ENCODE measurements at regions of chr17 and their contacts with region 1.

Region 1: GRCh38 chr17:28726226-28727130 is at the start of gene TLCD1:
- DNase-seq: peak; percentile 87
- ATAC-seq: peak; percentile 40
- H3K4me3 Mint-ChIP-seq: peak within 1 kb of the TSS; percentile 95
- H3K27ac Mint-ChIP-seq: peak within 1 kb of the TSS; percentile 99
- H3K4me1 Mint-ChIP-seq: peaks cover 70% of the 10 kb centered on the region
- H3K27me3 Mint-ChIP-seq: no peaks in the 10 kb centered on the region
- CTCF ChIP-seq: peak; percentile 78
- total RNA-seq, gene TLCD1: 40.7 and 41.0 TPM in 2 replicates

Region 2: DNA sequence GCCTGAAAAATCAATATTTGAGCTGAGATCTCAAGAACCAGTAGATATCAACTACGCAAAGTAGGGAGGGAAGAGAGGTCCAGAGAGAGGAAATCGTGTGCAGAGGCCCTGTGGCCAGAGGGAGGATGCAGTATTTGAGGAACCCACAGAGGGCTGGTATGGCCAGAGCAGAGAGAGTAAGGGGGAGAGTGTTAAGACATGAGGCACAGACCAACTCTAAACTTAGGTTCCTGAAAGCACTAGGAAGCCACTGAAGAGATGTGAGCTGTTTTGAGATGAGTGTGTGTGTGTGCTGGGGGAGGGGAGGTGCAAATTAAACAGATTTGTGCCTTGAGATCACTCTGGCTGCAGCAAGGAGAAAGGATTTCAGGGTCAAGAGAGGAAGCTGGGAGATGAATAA is 242.2 kb before region 1 on chr17:
- CTCF ChIA-PET with region 1: no interaction called
- POLR2A ChIA-PET with region 1: no interaction called
- intact Hi-C with region 1: no loop called
- DNase-seq: no peak
- ATAC-seq: no peak
- H3K4me3 Mint-ChIP-seq: no peak overlapping the region
- H3K27ac Mint-ChIP-seq: no peak overlapping the region
- H3K4me1 Mint-ChIP-seq: no peaks in the 10 kb centered on the region
- H3K27me3 Mint-ChIP-seq: no peaks in the 10 kb centered on the region
- CTCF ChIP-seq: no peak

Region 3: DNA sequence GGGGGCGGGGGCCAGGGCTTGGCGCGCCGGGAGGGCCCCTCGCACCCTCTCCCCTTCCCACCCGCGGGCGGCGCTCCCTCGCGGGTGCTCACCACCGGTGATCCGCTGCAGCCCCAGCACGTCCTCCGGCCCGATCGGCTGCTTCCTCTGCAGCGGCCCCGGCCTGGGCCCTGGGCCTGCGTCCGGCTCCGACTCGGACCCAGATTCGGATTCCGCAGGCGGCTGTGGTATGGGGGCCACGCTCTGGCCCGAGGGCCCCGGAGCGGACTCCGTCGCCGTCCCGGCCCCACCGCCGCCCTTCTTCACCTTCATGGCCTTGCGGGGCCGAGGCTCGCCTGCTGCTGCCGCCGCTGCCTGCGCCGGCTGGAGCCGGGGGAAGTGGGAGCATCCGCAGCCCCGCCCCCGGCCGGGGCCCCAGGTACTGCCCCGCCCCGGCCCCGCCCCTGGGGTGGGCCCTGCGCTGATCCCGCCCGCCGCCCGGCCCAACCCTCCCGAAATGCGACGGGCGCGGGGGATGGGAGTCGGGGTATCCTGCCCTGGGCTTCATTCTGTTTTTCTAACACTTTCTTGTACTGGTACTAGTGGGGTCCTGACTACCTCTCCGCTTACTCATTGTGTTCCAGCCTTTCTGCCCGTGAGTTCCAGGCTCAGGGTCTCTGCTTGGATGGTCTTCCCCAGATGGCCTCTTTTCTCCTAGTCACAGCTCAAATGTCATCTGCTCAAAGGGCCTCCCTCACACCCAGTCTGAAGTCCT is 174.1 kb before region 1 on chr17 and contains the start of gene UNC119:
- CTCF ChIA-PET with region 1: no interaction called
- POLR2A ChIA-PET with region 1: interaction called, 4 read pairs
- intact Hi-C with region 1: loop called (anchors 5 kb)
- DNase-seq: peak; percentile 85
- ATAC-seq: peak; percentile 66
- H3K4me3 Mint-ChIP-seq: peak within 1 kb of the TSS; percentile 97
- H3K27ac Mint-ChIP-seq: peak within 1 kb of the TSS; percentile 93
- H3K4me1 Mint-ChIP-seq: peaks cover 65% of the 10 kb centered on the region
- H3K27me3 Mint-ChIP-seq: no peaks in the 10 kb centered on the region
- CTCF ChIP-seq: no peak
- total RNA-seq, gene UNC119: 426 and 437 TPM in 2 replicates

Region 4: DNA sequence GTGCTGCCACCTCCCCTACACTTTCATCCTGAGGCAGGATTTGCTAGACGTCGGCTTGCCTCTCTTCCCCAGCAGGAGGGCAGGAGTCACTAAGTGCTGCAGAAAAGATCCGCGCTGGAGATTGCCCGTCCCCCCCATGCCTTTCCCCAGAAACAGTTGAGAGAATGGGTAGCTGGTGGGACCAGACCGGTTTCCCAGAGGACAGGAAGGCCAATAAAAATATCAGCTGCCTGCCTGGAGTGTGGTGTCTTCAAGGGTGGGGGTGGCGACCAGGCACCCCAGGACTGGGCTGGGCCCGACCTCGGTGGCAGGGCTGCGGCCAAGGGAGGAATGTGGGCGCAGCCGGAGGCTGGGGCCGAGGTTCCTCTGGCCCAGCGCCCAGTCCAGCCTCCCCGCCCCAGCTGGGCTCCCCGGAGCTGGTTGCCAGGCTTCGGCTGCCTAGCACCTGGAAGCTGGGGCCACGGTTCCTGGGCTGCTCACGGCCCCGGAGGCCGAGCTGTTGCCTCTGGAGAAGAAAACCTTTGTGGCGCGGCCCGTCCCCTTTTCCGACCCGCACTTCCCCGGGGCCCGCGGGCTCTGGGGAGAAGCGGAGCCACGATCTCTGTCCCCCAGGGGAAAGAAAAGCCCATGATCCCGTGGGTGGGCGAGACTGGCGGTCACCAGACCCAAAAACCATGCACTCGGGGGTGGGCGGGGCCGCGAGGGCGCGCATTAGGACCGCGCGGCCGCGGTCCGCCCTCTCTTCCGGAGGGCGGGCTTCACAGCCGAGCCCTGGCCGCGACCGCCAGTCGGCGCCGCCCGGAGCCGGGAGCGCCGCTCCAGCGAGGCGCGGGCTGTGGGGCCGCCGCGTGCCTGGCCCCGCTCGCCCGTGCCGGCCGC is 17.0 kb after region 1 on chr17 and contains the start of gene TRAF4:
- CTCF ChIA-PET with region 1: interaction called, 545 read pairs
- POLR2A ChIA-PET with region 1: interaction called, 2,384 read pairs
- intact Hi-C with region 1: loop called (anchors 1 kb)
- DNase-seq: peak; percentile 87
- ATAC-seq: peak; percentile 66
- H3K4me3 Mint-ChIP-seq: peak within 1 kb of the TSS; percentile 93
- H3K27ac Mint-ChIP-seq: peak within 1 kb of the TSS; percentile 99
- H3K4me1 Mint-ChIP-seq: peaks cover 70% of the 10 kb centered on the region
- H3K27me3 Mint-ChIP-seq: no peaks in the 10 kb centered on the region
- CTCF ChIP-seq: no peak
- total RNA-seq, gene TRAF4: 754 and 903 TPM in 2 replicates

Region 5: DNA sequence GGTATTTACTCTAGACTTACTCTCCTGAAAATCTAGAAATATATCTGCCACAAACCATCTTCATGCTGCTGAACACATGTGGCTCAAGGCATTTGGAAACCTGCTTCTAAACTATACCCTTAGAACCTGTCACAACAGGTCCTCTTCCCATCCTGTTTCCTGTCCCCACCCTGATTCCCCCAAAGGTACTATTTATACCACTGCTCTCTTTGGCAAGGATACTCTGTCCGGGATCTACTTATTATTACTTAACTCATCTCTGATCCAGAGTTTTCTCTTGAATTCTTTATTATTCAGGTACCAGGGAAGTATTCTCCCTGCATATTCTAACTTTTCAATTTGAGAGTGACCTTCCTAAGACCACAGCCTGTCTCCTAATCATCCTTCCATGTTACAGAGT is 50.7 kb after region 1 on chr17:
- CTCF ChIA-PET with region 1: no interaction called
- POLR2A ChIA-PET with region 1: interaction called, 14 read pairs
- intact Hi-C with region 1: no loop called
- DNase-seq: no peak
- ATAC-seq: no peak
- H3K4me3 Mint-ChIP-seq: no peak overlapping the region
- H3K27ac Mint-ChIP-seq: no peak overlapping the region
- H3K4me1 Mint-ChIP-seq: peaks cover 32% of the 10 kb centered on the region
- H3K27me3 Mint-ChIP-seq: no peaks in the 10 kb centered on the region
- CTCF ChIP-seq: no peak

Region 6: DNA sequence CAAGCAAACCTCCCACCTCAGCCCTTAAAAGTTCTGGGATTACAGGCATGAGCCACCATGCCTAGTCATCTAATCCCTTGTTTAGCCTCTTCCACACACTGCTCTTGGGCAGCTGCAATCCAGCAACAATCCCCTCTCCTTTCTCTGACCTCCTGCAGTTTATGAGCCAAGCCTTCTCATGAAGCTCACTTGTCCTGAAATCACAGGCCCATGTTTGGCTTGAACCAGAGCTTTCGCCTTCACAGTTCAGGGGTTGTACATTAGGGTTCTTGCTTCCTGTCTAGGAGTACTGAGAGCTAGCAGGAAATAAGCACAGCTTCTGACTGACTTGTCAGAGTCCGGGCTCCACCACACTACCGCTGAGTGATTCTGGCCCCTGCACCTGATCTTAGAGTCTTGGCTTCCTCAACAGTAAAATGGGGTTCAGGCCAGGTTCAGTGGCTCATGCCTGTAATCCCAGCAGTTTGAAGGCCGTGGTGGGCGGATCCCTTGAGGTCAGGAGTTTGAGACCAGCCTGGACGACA is 144.6 kb after region 1 on chr17:
- CTCF ChIA-PET with region 1: interaction called, 6 read pairs
- POLR2A ChIA-PET with region 1: interaction called, 20 read pairs
- intact Hi-C with region 1: no loop called
- DNase-seq: no peak
- ATAC-seq: peak; percentile 99
- H3K4me3 Mint-ChIP-seq: peak overlapping the region; percentile 50
- H3K27ac Mint-ChIP-seq: peak overlapping the region; percentile 95
- H3K4me1 Mint-ChIP-seq: peaks cover 30% of the 10 kb centered on the region
- H3K27me3 Mint-ChIP-seq: no peaks in the 10 kb centered on the region
- CTCF ChIP-seq: no peak

Region 7: DNA sequence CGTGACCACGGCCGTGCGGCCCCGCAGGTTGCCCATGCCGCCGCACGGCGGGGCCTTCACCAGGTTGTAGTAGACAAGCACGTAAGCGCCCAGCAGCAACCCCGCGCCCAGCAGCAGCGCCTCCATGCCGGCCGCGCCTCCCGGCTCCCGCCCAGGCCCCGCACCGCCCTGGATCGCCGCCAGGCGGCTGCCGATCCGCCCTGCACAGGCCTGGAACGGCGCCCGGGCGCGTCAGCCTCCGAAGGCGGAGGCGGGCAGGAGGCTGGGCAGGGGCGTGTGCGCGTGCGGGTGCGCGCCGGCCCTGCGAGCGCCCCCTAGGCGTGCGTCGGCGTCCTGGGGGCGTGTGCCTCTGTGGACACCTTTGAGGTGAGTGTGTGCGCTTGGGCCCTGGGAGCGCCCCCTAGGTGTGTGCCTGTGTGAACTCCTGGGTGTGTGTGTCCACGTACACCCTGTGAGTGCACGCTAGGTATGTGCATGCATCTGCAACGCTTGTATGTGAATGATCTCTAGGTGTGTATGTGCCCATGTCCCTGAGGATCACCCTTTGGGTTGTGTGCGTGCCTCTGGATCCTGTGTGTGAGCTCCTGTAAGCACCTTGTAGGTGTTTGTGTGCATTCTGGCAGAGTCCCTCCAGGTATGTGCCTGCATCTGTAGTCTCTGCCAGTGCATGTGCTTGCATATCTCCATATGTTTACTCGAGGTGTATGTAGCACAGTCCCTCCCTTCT is 176.5 kb after region 1 on chr17 and contains the start of gene DHRS13:
- CTCF ChIA-PET with region 1: interaction called, 37 read pairs
- POLR2A ChIA-PET with region 1: interaction called, 81 read pairs
- intact Hi-C with region 1: loop called (anchors 1 kb)
- DNase-seq: peak; percentile 97
- ATAC-seq: peak; percentile 90
- H3K4me3 Mint-ChIP-seq: peak within 1 kb of the TSS; percentile 82
- H3K27ac Mint-ChIP-seq: peak within 1 kb of the TSS; percentile 77
- H3K4me1 Mint-ChIP-seq: peaks cover 37% of the 10 kb centered on the region
- H3K27me3 Mint-ChIP-seq: no peaks in the 10 kb centered on the region
- CTCF ChIP-seq: peak; percentile 82
- total RNA-seq, gene DHRS13: 32.0 and 39.6 TPM in 2 replicates

Region 8: GRCh38 chr17:28951991-28952975 is 225.8 kb after region 1 on chr17:
- CTCF ChIA-PET with region 1: interaction called, 16 read pairs
- POLR2A ChIA-PET with region 1: interaction called, 95 read pairs
- intact Hi-C with region 1: loop called (anchors 1 kb)
- DNase-seq: peak; percentile 82
- ATAC-seq: peak; percentile 68
- H3K4me3 Mint-ChIP-seq: no peak overlapping the region
- H3K27ac Mint-ChIP-seq: no peak overlapping the region
- H3K4me1 Mint-ChIP-seq: peaks cover 17% of the 10 kb centered on the region
- H3K27me3 Mint-ChIP-seq: no peaks in the 10 kb centered on the region
- CTCF ChIP-seq: no peak

Measured in activated B cell treated with CpG ODN at 0.5 μM for 24 hours (primary cell).